ENCODE measurements at regions of chr10 and their contacts with region 1.

Region 1: DNA sequence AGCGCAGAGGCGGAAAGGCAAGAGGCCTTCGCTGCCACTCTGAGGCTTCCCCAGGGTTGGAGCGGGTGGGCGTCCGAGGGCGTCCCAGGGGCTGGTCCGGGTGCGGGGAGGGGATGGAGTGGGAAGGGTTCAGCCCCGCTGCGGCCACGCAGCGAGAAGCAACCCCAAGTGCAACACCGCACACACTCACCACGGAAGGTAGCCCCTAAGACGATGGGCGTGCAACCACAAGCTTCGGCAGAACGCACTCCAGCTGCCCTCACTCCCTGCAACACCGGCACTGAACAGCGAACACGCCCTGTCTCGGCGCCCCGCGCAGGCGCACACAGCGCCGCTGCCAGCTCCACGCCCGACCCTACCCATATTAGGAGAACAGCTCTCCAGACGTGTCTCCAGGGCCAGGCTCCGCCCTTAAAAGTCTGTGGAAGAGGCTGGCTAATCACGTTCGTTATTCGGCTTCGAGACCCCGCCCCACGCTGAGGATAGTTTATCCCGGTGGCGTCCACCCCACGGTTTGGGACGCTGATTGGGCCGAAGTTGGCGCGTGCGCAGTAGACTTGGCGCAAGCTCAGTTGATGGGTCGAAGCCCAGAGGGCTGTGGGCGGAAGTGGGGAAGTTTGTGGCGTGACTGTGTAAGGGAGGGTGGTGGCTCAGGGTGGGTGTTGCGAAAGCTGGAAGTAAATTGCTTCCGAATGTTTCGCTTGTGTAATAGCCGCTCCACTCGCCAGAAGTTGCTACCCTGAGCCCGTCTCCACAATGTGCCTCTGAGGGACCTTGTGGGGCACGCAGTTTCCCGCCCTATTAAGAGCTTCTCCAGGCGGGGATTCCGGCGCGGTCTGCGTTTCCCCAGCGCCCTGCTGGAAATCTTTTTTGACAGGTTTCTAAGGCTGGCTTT is at the start of gene RSU1:
- DNase-seq: peak; percentile 100
- H3K4me3 Mint-ChIP-seq: peak within 1 kb of the TSS; percentile 98
- H3K27ac Mint-ChIP-seq: peak within 1 kb of the TSS; percentile 97
- H3K4me1 Mint-ChIP-seq: peaks cover 31% of the 10 kb centered on the region
- H3K27me3 Mint-ChIP-seq: peaks cover 10% of the 10 kb centered on the region
- total RNA-seq, gene RSU1: 44.5 and 47.4 TPM in 2 replicates

Region 2: DNA sequence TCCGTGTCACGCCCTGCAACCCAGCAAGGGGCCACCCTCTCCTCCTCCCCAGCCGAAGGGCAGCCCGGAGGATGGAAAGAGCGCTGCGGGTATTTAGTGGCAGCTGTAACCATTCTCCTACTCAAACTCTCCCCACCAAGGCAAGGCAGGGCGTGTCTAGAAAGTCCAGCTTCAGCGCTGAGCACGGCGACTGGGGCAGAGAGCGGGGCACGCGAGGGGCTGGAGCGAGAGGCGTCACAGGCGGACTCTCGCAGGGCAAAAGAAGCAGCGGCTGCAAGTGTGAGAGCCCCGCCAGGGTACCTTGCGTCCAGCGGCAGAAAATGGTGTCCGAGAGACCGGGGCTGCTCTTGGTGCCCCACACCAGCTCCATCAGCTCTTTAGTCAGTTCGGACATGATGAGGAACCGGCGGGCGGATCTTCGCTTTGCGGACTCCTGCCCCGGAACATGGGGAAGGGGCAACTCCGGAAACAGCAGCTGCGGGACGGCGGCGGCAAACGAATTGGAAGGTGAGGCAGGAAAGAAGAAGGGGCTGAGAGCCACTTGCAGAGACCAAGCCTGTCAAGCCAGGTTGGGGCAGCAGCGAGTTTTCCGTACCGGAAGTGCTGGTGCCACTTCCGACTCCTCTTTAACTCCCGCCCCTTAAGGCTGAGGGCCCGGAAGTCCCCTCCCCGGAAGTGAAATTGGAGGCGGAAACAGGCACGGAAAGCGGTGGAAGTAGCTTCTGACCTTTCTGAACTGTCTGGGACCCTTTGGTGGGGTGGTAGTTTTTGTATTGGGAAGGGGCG is 957.3 kb before region 1 on chr10 and contains the start of gene MINDY3:
- intact Hi-C with region 1: loop called (anchors 1 kb)
- DNase-seq: peak; percentile 93
- H3K4me3 Mint-ChIP-seq: peak within 1 kb of the TSS; percentile 92
- H3K27ac Mint-ChIP-seq: peak within 1 kb of the TSS; percentile 93
- H3K4me1 Mint-ChIP-seq: peaks cover 25% of the 10 kb centered on the region
- H3K27me3 Mint-ChIP-seq: peaks cover 15% of the 10 kb centered on the region
- total RNA-seq, gene MINDY3: 16.3 and 20.1 TPM in 2 replicates

Region 3: GRCh38 chr10:16436758-16437539 is 380.4 kb before region 1 on chr10 and contains the start of gene PTER:
- intact Hi-C with region 1: loop called (anchors 1 kb)
- DNase-seq: peak; percentile 100
- H3K4me3 Mint-ChIP-seq: peak within 1 kb of the TSS; percentile 95
- H3K27ac Mint-ChIP-seq: peak within 1 kb of the TSS; percentile 96
- H3K4me1 Mint-ChIP-seq: peaks cover 37% of the 10 kb centered on the region
- H3K27me3 Mint-ChIP-seq: peaks cover 9% of the 10 kb centered on the region
- total RNA-seq, gene PTER: 16.7 and 17.8 TPM in 2 replicates

Region 4: GRCh38 chr10:16777473-16778370 is 39.6 kb before region 1 on chr10:
- intact Hi-C with region 1: loop called (anchors 1 kb)
- DNase-seq: peak; percentile 74
- H3K4me3 Mint-ChIP-seq: no peak overlapping the region
- H3K27ac Mint-ChIP-seq: peak overlapping the region; percentile 62
- H3K4me1 Mint-ChIP-seq: peaks cover 22% of the 10 kb centered on the region
- H3K27me3 Mint-ChIP-seq: no peaks in the 10 kb centered on the region

Region 5: GRCh38 chr10:16787361-16787791 is 30.0 kb before region 1 on chr10:
- intact Hi-C with region 1: loop called (anchors 1 kb)
- DNase-seq: peak; percentile 87
- H3K4me3 Mint-ChIP-seq: peak overlapping the region; percentile 64
- H3K27ac Mint-ChIP-seq: peak overlapping the region; percentile 85
- H3K4me1 Mint-ChIP-seq: peaks cover 33% of the 10 kb centered on the region
- H3K27me3 Mint-ChIP-seq: no peaks in the 10 kb centered on the region

Region 6: GRCh38 chr10:17200912-17201793 is 383.8 kb after region 1 on chr10 and contains the start of gene TRDMT1:
- intact Hi-C with region 1: loop called (anchors 1 kb)
- DNase-seq: peak; percentile 96
- H3K4me3 Mint-ChIP-seq: peak within 1 kb of the TSS; percentile 95
- H3K27ac Mint-ChIP-seq: peak within 1 kb of the TSS; percentile 92
- H3K4me1 Mint-ChIP-seq: peaks cover 33% of the 10 kb centered on the region
- H3K27me3 Mint-ChIP-seq: no peaks in the 10 kb centered on the region
- total RNA-seq, gene TRDMT1: 3.9 and 5.6 TPM in 2 replicates

Region 7: DNA sequence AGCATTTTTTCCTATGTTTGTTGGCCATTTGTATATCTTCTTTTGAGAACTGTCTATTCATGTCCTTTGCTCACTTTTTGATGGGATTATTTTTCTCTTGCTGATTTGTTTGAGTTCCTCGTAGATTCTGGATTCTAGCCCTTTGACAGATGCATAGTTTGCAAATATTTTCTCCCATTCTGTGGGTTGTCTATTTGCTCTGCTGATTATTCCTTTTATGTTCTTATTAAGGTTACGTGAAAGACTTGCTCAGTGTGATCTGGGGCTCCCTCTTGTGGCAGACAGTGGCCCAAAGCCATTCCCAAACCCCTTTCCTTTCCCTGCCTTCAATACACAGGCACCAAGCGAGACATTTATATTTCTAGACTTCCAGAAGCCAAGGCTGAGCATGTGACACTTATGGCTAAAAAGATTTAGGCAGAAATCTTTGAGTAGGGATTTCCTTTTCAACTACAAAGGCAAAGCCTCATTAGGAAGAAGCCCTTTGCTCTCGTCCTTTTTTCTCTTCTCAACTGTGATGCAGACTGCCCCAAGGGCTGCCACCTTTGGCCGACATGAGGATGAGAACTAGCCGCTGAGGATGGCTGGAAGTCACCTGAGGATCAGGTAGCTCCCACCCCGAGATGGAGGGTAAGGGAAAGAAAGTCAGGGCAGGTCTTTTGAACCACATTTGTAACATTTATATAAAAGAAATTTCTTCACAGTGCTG is 613.4 kb after region 1 on chr10:
- intact Hi-C with region 1: loop called (anchors 5 kb)
- DNase-seq: peak; percentile 87
- H3K4me3 Mint-ChIP-seq: no peak overlapping the region
- H3K27ac Mint-ChIP-seq: no peak overlapping the region
- H3K4me1 Mint-ChIP-seq: peaks cover 51% of the 10 kb centered on the region
- H3K27me3 Mint-ChIP-seq: peaks cover 18% of the 10 kb centered on the region